HEK293T (cell line): ENCODE measurements at regions of chr3 and their contacts with region 1.

Region 1: DNA sequence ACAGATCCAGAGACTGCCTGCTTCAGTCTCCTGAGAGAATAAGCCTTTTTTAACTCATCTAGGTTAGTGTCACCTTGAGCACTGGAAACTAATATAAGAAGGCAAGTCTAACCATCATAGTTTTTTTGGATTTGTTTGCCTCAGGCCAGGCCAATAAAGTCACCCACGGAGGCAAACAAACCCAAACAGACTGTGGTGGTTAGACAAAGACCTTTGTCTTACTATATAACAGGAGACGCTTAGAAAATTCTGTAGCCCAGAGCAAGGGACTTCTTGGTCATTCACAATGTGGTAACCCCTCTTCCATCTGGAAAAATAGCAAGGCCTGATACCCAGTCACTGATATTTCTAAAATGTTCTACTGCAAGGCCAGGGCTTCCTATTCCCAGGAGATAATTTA is 45.3 kb upstream of the PPP2R3A start:
- DNase-seq: no peak

Region 2: GRCh38 chr3:135944831-135945592 is 24.7 kb after region 1 on chr3:
- CTCF ChIA-PET with region 1: no interaction called
- POLR2A ChIA-PET with region 1: no interaction called
- DNase-seq: no peak

Region 3: GRCh38 chr3:136042608-136043221 is 122.4 kb after region 1 on chr3:
- CTCF ChIA-PET with region 1: interaction called, 10 read pairs
- POLR2A ChIA-PET with region 1: no interaction called
- DNase-seq: peak; percentile 29